ENCODE measurements at regions of chr5 and their contacts with region 1.

Region 1: DNA sequence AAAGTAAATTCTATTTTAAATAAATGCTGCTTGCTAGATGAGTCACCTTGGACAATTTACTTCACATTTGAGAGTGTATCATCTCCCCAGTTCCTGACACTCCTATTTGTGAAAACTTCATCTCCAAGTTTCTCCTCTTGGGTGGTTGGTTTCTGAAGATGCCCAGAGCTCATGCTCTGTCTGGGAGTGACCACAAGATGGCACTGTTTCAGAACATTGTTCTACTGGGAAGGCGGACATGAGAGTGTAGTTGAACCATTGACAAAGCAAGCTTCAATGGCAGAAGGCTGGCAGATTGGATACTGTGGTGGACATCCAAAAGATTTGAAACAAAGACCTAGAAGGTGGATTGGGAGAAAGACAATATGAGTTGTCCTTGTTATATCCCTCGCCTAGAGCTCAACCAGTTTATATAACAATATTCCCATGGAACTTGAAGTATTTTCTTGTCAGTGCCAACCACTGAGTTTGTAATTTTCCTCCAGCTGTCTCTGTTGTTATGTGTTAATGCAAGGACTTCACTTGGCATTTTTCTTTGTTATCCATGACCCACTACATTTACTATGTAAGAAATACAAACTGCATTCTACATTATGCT is 234.3 kb upstream of the ANKH start:
- DNase-seq: peak; percentile 67
- H3K4me3 ChIP-seq: no peak overlapping the region
- H3K27ac ChIP-seq: no peak overlapping the region
- H3K4me1 ChIP-seq: no peaks in the 10 kb centered on the region
- H3K27me3 ChIP-seq: no peaks in the 10 kb centered on the region
- CTCF ChIP-seq: peak; percentile 82
- EP300 ChIP-seq: no peak
- RAD21 ChIP-seq: peak; percentile 82

Region 2: GRCh38 chr5:15117688-15118087 is 11.8 kb after region 1 on chr5:
- CTCF ChIA-PET with region 1: interaction called, 15 read pairs
- POLR2A ChIA-PET with region 1: no interaction called
- DNase-seq: no peak
- H3K4me3 ChIP-seq: no peak overlapping the region
- H3K27ac ChIP-seq: no peak overlapping the region
- H3K4me1 ChIP-seq: no peaks in the 10 kb centered on the region; a peak in 1 of 4 replicates
- H3K27me3 ChIP-seq: no peaks in the 10 kb centered on the region; the same call in 1 of the 2 replicates
- CTCF ChIP-seq: no peak
- EP300 ChIP-seq: no peak
- RAD21 ChIP-seq: no peak

Region 3: GRCh38 chr5:15183522-15183921 is 77.6 kb after region 1 on chr5:
- CTCF ChIA-PET with region 1: interaction called, 46 read pairs
- POLR2A ChIA-PET with region 1: no interaction called
- DNase-seq: no peak
- H3K4me3 ChIP-seq: no peak overlapping the region
- H3K27ac ChIP-seq: no peak overlapping the region
- H3K4me1 ChIP-seq: no peaks in the 10 kb centered on the region
- H3K27me3 ChIP-seq: no peaks in the 10 kb centered on the region
- CTCF ChIP-seq: peak; percentile 38
- EP300 ChIP-seq: no peak
- RAD21 ChIP-seq: peak; percentile 68

Region 4: DNA sequence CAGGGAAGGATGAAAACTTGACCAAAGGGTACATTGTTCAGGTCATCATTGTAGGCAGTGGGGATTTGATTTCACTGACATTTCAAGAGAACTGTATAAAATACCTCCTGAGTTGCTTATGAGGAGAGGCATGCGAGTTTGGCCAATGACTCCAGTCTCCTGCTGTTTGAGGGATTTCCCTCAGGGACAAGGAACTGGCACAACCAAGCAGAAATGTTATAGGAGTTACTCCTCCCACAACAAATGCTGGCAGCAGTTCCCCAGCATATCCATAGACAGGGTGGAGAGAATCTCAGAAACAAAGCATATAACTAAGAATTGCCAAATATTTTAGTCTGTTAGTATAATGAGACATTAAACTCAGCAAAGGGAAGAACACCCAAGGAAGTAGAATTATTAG is 346.9 kb after region 1 on chr5:
- CTCF ChIA-PET with region 1: no interaction called
- POLR2A ChIA-PET with region 1: no interaction called
- DNase-seq: no peak
- H3K4me3 ChIP-seq: no peak overlapping the region
- H3K27ac ChIP-seq: no peak overlapping the region
- H3K4me1 ChIP-seq: no peaks in the 10 kb centered on the region; a peak in 2 of 4 replicates
- H3K27me3 ChIP-seq: no peaks in the 10 kb centered on the region
- CTCF ChIP-seq: no peak
- EP300 ChIP-seq: no peak
- RAD21 ChIP-seq: no peak

Region 5: DNA sequence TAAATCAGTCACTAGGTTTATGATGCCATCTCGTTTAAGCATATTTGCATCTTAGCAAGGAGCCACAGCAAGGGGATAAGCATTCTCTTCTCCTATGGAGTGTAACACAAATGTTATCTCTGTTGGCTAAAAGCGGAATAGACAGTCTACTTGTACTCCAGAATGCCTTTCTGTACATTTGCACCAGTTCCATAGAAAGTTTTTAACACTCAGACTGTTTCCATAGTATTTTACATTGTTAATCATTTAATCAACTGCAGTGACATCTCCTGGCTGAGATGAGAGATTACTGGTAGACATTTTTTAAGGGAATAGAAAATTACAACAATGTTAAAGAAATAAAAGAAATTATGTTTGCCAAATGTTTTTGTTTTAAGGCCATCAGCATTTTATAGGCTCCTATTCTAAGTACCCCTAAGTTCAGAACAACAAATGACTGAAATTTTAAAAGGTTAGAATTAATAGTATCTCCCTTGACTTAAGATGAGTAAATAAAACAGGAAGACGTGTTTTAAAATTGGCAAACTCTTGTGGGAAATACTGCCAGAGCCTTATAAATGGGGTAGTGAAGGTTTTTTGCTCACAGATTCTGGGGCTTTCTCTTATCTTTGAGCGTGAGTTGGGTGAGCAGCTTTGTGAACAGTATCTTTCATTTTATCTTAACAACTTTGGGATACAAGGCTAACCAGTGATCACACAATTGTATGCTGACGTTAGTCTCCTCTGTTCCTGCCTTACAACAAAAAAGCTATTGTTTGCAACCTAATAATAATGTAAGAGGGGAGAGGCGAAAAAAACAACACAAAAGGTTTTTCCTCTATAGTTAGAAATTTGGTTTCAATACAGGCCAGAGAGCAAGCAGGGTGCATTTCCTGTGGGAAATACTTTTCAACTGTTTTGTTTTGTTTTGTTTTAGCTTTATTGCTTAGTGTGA is 688.4 kb after region 1 on chr5:
- CTCF ChIA-PET with region 1: interaction called, 21 read pairs
- POLR2A ChIA-PET with region 1: no interaction called
- DNase-seq: peak; percentile 26
- H3K4me3 ChIP-seq: no peak overlapping the region
- H3K27ac ChIP-seq: peak overlapping the region in 1 of 2 experiments; percentile 67; a peak in 2 of 4 replicates
- H3K4me1 ChIP-seq: peaks cover 12 to 31% of the 10 kb centered on the region in 2 experiments
- H3K27me3 ChIP-seq: no peaks in the 10 kb centered on the region
- CTCF ChIP-seq: peak; percentile 62
- EP300 ChIP-seq: no peak
- RAD21 ChIP-seq: peak; percentile 67

Measured in SK-N-SH (cell line).